Posterior vena cava (tissue), 2 donors: ENCODE measurements at regions of chr16 and their contacts with region 1.

Region 1: DNA sequence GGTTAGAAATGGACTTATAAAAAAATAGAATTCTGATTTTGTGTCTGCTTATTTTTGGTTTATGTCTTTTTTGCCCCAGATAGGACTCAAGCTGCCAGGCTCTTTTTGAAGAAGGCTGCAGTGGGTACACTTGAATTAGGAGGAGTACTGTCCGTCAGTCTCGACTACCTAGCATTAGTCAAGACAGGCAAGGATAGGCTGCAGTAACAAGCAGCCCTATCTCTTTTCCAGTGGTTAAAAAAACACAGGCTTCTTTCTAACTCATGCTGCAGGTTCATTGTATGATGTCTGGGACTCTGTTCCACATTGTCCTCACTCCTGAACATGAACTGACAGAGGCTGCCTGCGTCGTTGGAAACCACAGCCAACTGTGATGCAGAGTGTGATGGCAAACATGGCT is 8.0 kb downstream of the C16orf46 start:
- DNase-seq: no peak

Region 2: DNA sequence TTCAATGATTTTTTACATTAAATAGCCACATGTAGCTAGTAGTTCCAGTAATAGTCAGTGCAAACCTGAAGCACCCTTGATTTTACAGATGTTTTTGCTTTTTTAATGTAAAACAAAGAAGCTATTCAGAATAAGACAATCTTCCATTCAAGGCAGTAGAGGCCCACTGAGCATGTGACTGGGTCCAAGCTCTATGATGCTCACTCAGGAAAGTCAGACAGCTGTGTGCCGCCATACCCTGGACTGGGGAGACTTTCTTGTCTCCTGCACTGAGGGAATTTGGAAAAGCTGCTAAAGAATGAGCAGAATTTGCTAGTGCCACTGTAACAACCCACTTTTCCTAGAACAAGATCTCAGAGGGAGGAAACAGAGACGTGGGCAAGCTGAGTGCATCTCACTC is 50.6 kb before region 1 on chr16:
- intact Hi-C with region 1: no loop called
- DNase-seq: no peak

Region 3: DNA sequence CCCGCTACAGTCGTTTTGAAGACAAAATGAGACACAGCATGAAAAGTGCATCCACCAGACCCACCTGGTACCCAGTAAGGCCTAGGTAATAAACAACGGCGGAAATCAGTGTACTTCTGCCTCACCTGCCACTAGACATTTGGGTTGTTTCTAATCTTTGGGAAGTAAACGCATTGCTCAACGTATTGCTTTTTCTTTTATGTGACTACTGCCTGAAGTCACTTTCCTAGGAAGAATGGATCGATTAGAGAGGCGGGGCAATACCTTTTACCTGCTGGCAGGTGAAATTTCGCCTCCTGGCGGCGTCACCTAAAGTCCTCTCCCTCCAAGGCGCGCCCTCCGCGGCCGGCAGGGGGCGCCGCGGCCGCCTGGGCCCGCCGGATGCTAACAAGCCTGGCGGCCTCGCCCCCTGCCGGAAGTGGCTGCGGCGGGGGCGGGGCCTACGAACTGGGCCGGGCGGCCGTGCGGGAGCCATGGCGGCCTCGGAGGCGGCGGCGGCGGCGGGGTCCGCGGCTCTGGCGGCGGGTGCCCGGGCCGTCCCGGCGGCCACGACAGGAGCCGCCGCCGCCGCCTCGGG is 33.6 kb before region 1 on chr16 and contains the start of gene ATMIN:
- intact Hi-C with region 1: no loop called
- DNase-seq: peak; percentile 95
- total RNA-seq, gene ATMIN: 24.8 to 27.3 TPM

Region 4: DNA sequence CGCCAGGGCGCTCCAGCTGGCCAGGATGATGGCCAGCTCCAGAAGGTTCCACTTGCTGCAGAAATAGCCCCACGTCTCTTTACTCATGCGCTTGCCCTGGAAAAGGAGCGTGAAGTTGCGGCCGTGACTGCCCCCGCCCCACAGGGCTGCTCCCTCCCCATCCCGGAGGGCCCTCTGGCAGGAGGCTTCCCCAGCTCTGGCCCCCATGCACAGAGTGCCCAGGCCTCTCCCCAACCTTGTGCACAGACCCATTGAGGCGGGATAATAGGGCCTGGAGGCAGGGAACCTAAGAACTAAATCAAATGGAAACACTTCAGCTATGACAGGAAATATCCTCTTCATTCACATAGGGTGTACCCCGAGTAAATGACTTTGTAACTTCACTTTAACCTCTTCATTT is 48.4 kb after region 1 on chr16:
- intact Hi-C with region 1: loop called in 1 of 2 experiments (anchors 1 kb)
- DNase-seq: no peak

Region 5: DNA sequence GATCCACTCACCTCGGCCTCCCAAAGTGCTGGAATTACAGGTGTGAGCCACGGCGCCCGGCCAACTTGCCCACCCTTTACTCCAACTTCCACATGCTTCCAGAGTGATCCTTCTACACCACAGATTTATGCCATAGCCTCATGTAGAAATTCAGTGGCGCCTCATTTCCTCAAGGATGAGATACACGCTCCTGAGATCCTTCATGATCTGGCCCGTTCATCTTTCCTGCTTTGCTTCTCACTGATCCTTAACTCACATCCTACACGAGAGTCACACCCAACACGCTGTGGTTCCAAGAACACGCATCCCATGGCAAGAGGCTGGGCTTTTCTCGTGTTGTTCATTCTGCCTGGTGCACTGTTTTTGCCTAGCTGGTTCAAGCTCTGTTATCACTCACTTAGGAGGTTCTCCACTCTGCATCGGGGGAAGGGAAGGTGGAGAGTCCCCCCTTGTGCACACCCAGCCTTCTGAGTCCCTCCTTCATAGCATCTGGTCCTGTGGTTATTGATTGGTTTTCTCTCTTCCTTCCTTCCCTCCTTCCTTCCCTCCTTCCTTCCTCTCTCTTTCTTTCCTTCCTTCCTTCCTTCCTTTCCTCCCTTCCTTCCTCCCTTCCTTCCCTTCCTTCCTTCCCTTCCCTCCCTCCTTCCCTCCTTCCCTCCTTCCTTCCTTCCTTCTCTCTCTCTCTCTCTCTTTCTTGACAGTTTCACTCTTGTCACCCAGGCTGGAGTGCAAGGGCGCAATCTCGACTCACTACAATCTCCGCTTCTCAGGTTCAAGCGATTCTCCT is 59.9 kb after region 1 on chr16:
- intact Hi-C with region 1: no loop called
- DNase-seq: no peak